Caco-2 (cell line): ENCODE measurements at regions of chr15 and their contacts with region 1.

Region 1: DNA sequence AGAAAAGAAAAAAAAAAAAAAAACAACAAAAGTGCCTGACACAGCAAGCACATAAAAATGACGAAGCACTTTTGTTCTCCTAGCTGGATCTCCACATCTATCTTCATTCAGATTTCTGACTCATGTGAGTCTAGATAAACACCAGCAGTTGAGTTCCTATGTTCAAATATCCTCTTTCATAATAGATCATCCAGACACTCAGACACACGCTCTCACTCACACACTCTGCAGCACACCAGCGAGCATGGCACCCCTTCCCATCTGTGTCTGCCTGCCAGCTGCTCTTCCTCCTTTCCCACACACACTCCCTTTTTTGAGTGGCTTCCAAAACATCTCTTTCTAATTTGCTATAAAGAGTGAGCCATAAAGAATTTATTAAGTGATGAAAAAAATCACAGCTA is 19.8 kb upstream of the CELF6 start:
- DNase-seq: no peak
- H3K4me3 ChIP-seq: no peak overlapping the region
- H3K4me3 Mint-ChIP-seq: no peak overlapping the region
- H3K27ac Mint-ChIP-seq: no peak overlapping the region
- H3K4me1 ChIP-seq: no peaks in the 10 kb centered on the region
- H3K4me1 Mint-ChIP-seq: no peaks in the 10 kb centered on the region
- H3K27me3 ChIP-seq: no peaks in the 10 kb centered on the region
- H3K27me3 Mint-ChIP-seq: no peaks in the 10 kb centered on the region
- CTCF ChIP-seq: no peak

Region 2: DNA sequence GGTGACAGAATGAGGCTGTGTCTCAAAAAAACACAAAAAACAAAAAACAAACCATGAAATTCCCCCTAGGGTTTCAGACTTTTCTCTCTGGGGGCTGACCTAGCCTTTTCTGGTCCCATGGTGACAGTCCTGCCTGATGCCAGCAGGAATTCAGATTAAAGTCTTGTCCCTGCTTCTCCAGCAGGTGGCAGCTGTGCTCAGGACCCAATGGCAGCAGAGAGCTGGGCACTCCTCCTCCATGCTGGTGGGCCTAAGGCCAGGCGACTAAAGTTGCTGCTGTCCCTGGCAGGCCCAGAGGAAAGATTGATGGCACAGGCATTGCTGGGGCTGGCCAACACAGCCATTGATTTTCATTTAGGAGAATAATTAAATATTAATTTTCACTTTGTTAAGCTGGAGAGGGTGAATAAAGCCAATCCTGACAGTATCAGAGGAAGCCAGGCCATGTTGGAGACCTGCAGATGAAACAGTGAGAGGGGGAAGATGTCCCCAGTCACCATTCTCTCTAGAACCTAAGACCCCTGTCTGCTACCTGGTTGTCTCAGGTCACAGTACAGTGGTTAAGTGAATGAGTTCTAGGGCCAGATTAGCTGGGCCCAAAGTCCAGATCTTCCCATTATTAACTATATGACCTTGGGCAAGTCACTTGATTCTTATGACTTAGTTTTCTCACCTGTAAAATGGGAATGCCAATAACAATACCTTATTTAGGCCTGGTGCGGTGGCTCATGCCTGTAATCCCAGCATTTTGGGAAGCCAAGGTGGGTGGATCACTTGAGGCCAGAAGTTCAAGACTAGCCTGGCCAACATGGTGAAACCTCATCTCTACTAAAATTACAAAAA is 27.0 kb before region 1 on chr15:
- CTCF ChIA-PET with region 1: no interaction called
- POLR2A ChIA-PET with region 1: no interaction called
- intact Hi-C with region 1: loop called (anchors 1 kb)
- DNase-seq: peak; percentile 67 to 73
- H3K4me3 ChIP-seq: no peak overlapping the region
- H3K4me3 Mint-ChIP-seq: no peak overlapping the region
- H3K27ac Mint-ChIP-seq: no peak overlapping the region
- H3K4me1 ChIP-seq: no peaks in the 10 kb centered on the region
- H3K4me1 Mint-ChIP-seq: no peaks in the 10 kb centered on the region
- H3K27me3 ChIP-seq: no peaks in the 10 kb centered on the region
- H3K27me3 Mint-ChIP-seq: peaks cover 21% of the 10 kb centered on the region
- CTCF ChIP-seq: peak; percentile 65 to 73

Region 3: DNA sequence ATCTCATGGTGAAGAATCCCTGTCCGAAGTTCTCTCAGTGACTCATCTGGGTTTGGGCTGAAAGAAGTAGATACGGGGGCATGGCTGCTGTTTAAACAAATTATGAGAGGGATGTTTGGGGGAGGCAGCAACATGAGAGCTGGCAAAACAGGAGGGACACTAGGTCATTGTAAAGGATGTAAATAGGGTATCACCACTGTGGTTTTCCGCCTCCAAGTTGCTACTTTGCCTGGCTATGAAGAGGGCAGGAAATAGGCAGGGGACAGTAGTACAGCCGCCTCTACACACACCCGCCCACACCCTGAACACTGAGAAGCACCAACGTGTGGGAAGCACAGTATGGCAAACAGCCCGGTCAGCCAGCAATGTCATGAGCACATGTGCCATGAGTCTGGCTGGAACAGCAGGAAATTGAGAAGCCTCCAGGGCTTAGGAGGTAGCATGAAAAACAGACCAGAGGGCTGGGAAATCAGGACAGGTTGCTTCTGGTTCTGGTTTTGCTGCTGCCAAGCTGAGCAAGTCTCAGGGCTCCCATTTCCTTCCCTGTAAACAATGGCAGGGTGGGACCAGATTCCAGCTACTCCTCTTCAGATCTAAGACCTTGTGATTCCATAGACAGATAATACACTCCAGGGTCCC is 19.0 kb after region 1 on chr15:
- CTCF ChIA-PET with region 1: no interaction called
- POLR2A ChIA-PET with region 1: no interaction called
- intact Hi-C with region 1: no loop called
- DNase-seq: no peak
- H3K4me3 ChIP-seq: no peak overlapping the region
- H3K4me3 Mint-ChIP-seq: no peak overlapping the region
- H3K27ac Mint-ChIP-seq: no peak overlapping the region
- H3K4me1 ChIP-seq: no peaks in the 10 kb centered on the region
- H3K4me1 Mint-ChIP-seq: no peaks in the 10 kb centered on the region
- H3K27me3 ChIP-seq: no peaks in the 10 kb centered on the region
- H3K27me3 Mint-ChIP-seq: no peaks in the 10 kb centered on the region
- CTCF ChIP-seq: no peak

Region 4: GRCh38 chr15:72473614-72474465 is 134.1 kb after region 1 on chr15 and contains the start of gene ARIH1:
- CTCF ChIA-PET with region 1: no interaction called
- POLR2A ChIA-PET with region 1: no interaction called
- intact Hi-C with region 1: loop called (anchors 10 kb)
- DNase-seq: peak; percentile 96 to 98
- H3K4me3 ChIP-seq: peak within 1 kb of the TSS; percentile 100
- H3K4me3 Mint-ChIP-seq: peak within 1 kb of the TSS; percentile 93
- H3K27ac Mint-ChIP-seq: peak within 1 kb of the TSS; percentile 99
- H3K4me1 ChIP-seq: peaks cover 6% of the 10 kb centered on the region; the same call in 1 of the 2 replicates
- H3K4me1 Mint-ChIP-seq: peaks cover 7% of the 10 kb centered on the region
- H3K27me3 ChIP-seq: no peaks in the 10 kb centered on the region
- H3K27me3 Mint-ChIP-seq: no peaks in the 10 kb centered on the region
- CTCF ChIP-seq: peak in 1 of 2 experiments; percentile 25
- total RNA-seq, gene ARIH1: 116 and 126 TPM in 2 replicates

Region 5: DNA sequence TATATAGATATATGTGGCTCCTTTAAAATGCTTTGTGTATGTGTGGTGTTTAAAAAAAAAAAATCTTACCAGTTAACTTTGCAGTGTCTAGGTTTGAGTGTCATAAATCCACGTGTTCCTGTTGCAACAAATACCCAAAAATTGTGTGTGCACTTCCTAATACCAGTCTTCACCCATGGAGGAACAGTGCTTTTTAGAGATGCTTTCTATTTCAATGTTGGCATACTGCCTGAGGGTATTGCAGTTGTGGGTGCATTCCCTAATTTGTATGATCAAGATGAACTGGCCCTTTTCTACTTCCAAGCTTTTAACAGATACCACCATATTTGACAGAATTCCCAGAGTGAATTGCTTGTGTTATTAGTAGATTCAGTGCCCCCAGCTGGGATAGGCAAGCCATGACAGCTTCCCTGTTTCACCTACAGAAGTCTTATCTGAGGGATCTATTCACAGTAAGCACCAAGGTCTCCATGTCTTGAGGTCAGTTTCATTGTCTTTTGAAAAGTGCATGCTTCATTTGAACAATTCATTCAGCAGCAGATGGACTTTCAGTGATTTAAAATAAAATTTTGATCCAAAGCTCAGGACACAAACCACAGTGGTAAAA is 245.8 kb after region 1 on chr15:
- CTCF ChIA-PET with region 1: no interaction called
- POLR2A ChIA-PET with region 1: no interaction called
- intact Hi-C with region 1: loop called (anchors 5 kb)
- DNase-seq: no peak
- H3K4me3 ChIP-seq: no peak overlapping the region
- H3K4me3 Mint-ChIP-seq: no peak overlapping the region
- H3K27ac Mint-ChIP-seq: no peak overlapping the region
- H3K4me1 ChIP-seq: no peaks in the 10 kb centered on the region
- H3K4me1 Mint-ChIP-seq: peaks cover 7% of the 10 kb centered on the region
- H3K27me3 ChIP-seq: no peaks in the 10 kb centered on the region
- H3K27me3 Mint-ChIP-seq: no peaks in the 10 kb centered on the region
- CTCF ChIP-seq: peak; percentile 4 to 9